IMR-90 (cell line): ENCODE measurements at regions of chr1 and their contacts with region 1.

Region 1: GRCh38 chr1:99441299-99442095 is 177.2 kb downstream of the PLPPR4 start:
- DNase-seq: peak; percentile 67
- ATAC-seq: peak; percentile 59; the same call in 1 of the 2 replicates
- H3K4me3 ChIP-seq: no peak overlapping the region
- H3K27ac ChIP-seq: no peak overlapping the region
- H3K4me1 ChIP-seq: no peaks in the 10 kb centered on the region
- H3K27me3 ChIP-seq: no peaks in the 10 kb centered on the region
- CTCF ChIP-seq: no peak
- POLR2A ChIP-seq: no peak
- RAD21 ChIP-seq: no peak

Region 2: GRCh38 chr1:99119188-99119587 is 322.3 kb before region 1 on chr1:
- CTCF ChIA-PET with region 1: no interaction called
- POLR2A ChIA-PET with region 1: no interaction called
- dilution Hi-C with region 1: no loop called
- in situ Hi-C with region 1: no loop called
- intact Hi-C with region 1: no loop called
- DNase-seq: no peak
- ATAC-seq: no peak
- H3K4me3 ChIP-seq: no peak overlapping the region
- H3K27ac ChIP-seq: no peak overlapping the region
- H3K4me1 ChIP-seq: no peaks in the 10 kb centered on the region
- H3K27me3 ChIP-seq: no peaks in the 10 kb centered on the region
- CTCF ChIP-seq: no peak
- POLR2A ChIP-seq: no peak
- RAD21 ChIP-seq: no peak

Region 3: DNA sequence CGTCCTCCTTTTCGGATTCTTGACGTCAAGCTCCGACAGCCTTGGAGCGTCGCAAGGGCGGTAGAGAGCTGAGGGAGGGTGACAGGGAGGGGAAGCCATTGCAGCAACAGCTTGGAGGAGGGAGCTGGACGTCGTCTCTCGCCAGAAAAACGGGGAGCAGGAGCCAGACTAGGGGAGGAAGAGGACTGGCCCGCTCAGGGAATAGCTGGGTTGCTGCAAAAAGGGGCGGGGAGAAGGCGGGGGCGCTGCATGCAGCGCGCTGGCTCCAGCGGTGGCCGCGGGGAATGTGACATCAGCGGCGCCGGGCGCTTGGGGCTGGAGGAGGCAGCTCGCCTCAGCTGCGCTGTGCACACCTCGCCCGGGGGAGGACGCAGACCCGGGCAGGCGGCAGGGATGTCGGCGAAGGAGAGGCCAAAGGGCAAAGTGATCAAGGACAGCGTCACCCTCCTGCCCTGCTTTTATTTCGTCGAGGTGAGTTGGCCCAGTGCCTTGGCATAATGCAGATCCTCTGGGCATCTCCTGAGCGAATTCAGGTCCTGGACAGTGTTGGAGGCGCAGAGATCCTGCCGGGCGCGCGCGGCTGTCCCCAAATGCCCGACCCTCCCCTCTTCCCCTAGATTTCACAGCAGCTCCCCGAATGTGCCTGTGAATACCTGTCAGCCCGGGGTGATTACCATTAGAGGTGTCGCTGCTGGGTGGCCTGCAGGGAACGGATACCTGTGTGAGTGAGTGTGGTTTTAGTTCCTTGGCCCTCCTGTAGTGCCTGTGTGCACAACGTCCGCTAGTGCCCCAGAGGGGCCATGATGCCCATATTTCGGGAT is 177.1 kb before region 1 on chr1 and contains the start of gene PLPPR4:
- CTCF ChIA-PET with region 1: no interaction called
- POLR2A ChIA-PET with region 1: no interaction called
- dilution Hi-C with region 1: no loop called
- in situ Hi-C with region 1: no loop called
- intact Hi-C with region 1: loop called (anchors 5 kb)
- DNase-seq: peak; percentile 43
- ATAC-seq: peak; percentile 83
- H3K4me3 ChIP-seq: peak within 1 kb of the TSS; percentile 57
- H3K27ac ChIP-seq: 0 out of 2 replicates have a peak within 1 kb of the TSS, but pooled peaks have one; percentile 14
- H3K4me1 ChIP-seq: peaks cover 14% of the 10 kb centered on the region
- H3K27me3 ChIP-seq: no peaks in the 10 kb centered on the region
- CTCF ChIP-seq: no peak
- POLR2A ChIP-seq: 0 out of 2 replicates have a peak, but pooled peaks have one; percentile 35
- RAD21 ChIP-seq: no peak
- total RNA-seq, gene PLPPR4: 6.4 and 7.0 TPM in 2 replicates

Region 4: DNA sequence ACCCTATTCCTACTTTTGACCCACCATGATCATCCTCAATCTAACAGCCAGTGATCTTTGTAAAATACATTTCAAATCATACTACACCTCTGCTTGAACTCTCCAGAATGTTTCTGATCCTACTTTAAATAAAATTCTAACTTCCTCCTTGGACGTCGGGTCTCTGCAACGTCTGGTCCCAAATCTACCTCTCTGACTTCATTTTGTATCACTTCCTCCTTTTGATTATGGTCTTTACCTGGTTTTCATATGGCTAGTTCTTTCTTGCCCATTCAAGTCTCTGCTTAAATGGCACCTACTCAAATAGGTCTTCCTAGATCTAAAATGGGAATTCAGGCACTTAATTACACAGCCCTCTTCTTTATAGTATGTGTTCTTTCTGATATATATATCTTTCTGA is 159.0 kb before region 1 on chr1:
- CTCF ChIA-PET with region 1: no interaction called
- POLR2A ChIA-PET with region 1: no interaction called
- dilution Hi-C with region 1: no loop called
- in situ Hi-C with region 1: no loop called
- intact Hi-C with region 1: no loop called
- DNase-seq: no peak
- ATAC-seq: no peak
- H3K4me3 ChIP-seq: no peak overlapping the region
- H3K27ac ChIP-seq: no peak overlapping the region
- H3K4me1 ChIP-seq: peaks cover 2% of the 10 kb centered on the region; the same call in 1 of the 2 replicates
- H3K27me3 ChIP-seq: no peaks in the 10 kb centered on the region
- CTCF ChIP-seq: no peak
- POLR2A ChIP-seq: no peak
- RAD21 ChIP-seq: no peak

Region 5: DNA sequence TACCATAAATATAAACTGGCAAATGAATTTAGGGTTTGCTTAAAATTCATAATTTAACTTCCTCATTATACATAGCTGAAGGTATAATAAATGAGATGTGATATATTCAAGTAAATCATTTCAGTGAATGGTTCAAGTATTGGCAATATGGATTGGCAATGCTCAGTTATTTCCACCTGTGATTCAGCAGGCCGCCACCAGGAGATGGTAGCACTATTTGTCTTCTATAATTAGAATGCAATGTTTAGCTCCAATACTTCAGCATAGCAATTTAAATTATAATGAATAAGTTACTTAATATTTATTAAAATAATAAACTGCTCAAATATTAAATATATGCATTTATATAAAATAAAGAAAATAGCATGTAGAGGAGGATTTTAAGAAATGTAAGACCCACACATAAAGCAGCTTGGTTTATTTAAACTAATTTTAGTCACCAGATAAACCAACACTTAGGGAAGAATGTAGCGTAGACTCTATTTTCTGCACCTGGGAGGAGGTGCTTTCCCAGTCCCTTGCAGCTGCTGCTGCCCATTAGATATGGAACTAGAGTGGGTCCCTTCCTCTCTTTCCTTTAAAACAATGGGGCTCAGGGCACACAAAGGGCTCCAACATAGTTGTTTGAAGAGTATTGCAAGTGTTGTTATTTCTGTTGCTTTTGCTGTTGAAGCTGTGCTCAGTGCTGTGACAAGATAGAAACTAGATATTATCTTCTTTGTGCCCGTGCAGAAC is 115.1 kb before region 1 on chr1:
- CTCF ChIA-PET with region 1: no interaction called
- POLR2A ChIA-PET with region 1: no interaction called
- dilution Hi-C with region 1: no loop called
- in situ Hi-C with region 1: no loop called
- intact Hi-C with region 1: no loop called
- DNase-seq: no peak
- ATAC-seq: no peak
- H3K4me3 ChIP-seq: no peak overlapping the region
- H3K27ac ChIP-seq: no peak overlapping the region
- H3K4me1 ChIP-seq: no peaks in the 10 kb centered on the region
- H3K27me3 ChIP-seq: no peaks in the 10 kb centered on the region; the same call in none of the 2 replicates
- CTCF ChIP-seq: peak; percentile 20; the same call in 1 of the 2 replicates
- POLR2A ChIP-seq: no peak
- RAD21 ChIP-seq: peak; percentile 27; the same call in 1 of the 2 replicates

Region 6: DNA sequence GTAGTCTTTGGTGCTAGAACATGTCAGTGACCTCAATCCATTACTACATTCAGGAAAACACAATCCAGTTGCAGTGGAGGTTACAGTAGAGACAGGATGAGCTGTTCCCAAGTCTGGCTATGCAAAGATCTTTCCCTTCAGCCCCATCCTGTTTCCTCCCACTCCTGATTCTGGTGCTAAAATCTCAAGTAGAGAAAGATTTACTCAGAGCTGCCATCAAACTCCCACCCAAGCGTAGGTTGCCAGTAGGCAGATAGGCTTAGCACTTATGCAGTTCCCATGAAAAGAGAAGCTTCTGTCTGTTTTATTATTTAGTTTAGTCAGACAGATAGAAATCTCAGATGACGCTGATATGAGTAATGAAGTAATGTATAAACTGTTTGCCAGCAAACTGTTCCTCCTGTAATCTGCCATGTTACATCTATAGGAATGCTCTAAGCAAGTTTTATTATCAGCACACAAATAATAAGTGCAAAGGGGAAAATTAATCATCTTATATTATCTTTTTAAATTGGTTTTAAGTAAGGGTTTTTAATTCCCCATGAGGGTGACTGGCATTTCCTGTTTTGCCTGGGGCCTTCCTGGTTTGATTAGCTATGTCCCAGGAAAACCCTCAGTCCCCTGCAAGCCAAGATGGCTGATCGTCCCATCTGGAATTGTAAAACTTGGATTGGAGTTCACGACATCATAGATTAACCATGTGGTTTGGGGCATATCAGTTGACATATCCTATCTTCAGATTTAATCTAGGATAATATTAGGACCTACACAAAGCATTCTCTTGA is 16.1 kb after region 1 on chr1:
- CTCF ChIA-PET with region 1: interaction called, 4 read pairs
- POLR2A ChIA-PET with region 1: no interaction called
- dilution Hi-C with region 1: no loop called
- in situ Hi-C with region 1: no loop called
- intact Hi-C with region 1: loop called (anchors 2 kb)
- DNase-seq: peak; percentile 89
- ATAC-seq: peak; percentile 90
- H3K4me3 ChIP-seq: no peak overlapping the region
- H3K27ac ChIP-seq: no peak overlapping the region
- H3K4me1 ChIP-seq: peaks cover 4% of the 10 kb centered on the region; the same call in 1 of the 2 replicates
- H3K27me3 ChIP-seq: no peaks in the 10 kb centered on the region
- CTCF ChIP-seq: no peak
- POLR2A ChIP-seq: no peak
- RAD21 ChIP-seq: no peak

Region 7: GRCh38 chr1:99776120-99776519 is 334.6 kb after region 1 on chr1:
- CTCF ChIA-PET with region 1: no interaction called
- POLR2A ChIA-PET with region 1: no interaction called
- dilution Hi-C with region 1: no loop called
- in situ Hi-C with region 1: no loop called
- intact Hi-C with region 1: no loop called
- DNase-seq: no peak
- ATAC-seq: no peak
- H3K4me3 ChIP-seq: no peak overlapping the region
- H3K27ac ChIP-seq: no peak overlapping the region
- H3K4me1 ChIP-seq: no peaks in the 10 kb centered on the region
- H3K27me3 ChIP-seq: peaks cover 3% of the 10 kb centered on the region; the same call in 1 of the 2 replicates
- CTCF ChIP-seq: no peak
- POLR2A ChIP-seq: no peak
- RAD21 ChIP-seq: no peak